ENCODE measurements at regions of chr4 and their contacts with region 1.

Region 1: GRCh38 chr4:152348670-152349069 is 187.2 kb downstream of the FBXW7 start:
- DNase-seq: no peak
- H3K4me3 Mint-ChIP-seq: no peak overlapping the region
- H3K27ac Mint-ChIP-seq: no peak overlapping the region
- H3K4me1 Mint-ChIP-seq: peaks cover 8% of the 10 kb centered on the region
- H3K27me3 Mint-ChIP-seq: no peaks in the 10 kb centered on the region
- CTCF ChIP-seq: no peak

Region 2: DNA sequence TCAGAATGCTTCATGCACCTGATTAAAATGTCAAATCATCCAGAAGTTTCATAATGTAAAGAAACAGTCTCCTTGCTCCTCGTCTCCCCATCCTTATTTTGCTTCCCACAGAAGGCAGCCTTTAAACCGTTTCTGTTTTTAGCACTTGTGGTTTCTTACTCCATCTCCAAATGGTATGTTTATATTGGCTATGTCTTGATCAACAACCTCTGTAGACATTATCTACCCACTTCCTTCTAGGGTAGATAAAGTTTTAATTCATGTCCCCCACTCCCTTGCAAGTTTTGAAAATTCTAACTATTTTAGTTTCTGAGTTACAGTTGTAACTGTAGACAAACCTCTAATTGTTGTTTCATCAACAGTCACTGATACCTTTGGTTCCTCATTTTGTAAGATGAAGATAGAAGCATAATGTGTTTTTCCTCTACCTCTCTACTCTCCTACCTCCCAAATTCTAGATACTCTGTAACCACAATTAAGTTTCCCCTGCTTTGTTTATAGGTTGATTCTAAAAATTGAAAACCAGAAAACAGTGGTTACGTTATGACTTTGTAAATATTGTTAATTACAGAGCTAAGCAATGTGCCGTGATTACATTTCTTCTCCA is 296.1 kb before region 1 on chr4:
- CTCF ChIA-PET with region 1: no interaction called
- intact Hi-C with region 1: no loop called
- DNase-seq: no peak
- H3K4me3 Mint-ChIP-seq: no peak overlapping the region
- H3K27ac Mint-ChIP-seq: no peak overlapping the region
- H3K4me1 Mint-ChIP-seq: no peaks in the 10 kb centered on the region
- H3K27me3 Mint-ChIP-seq: peaks cover 34% of the 10 kb centered on the region
- CTCF ChIP-seq: no peak

Region 3: GRCh38 chr4:152328596-152328995 is 20.1 kb before region 1 on chr4:
- CTCF ChIA-PET with region 1: no interaction called
- intact Hi-C with region 1: loop called (anchors 2 kb)
- DNase-seq: no peak
- H3K4me3 Mint-ChIP-seq: no peak overlapping the region
- H3K27ac Mint-ChIP-seq: no peak overlapping the region
- H3K4me1 Mint-ChIP-seq: no peaks in the 10 kb centered on the region
- H3K27me3 Mint-ChIP-seq: no peaks in the 10 kb centered on the region
- CTCF ChIP-seq: no peak

Region 4: DNA sequence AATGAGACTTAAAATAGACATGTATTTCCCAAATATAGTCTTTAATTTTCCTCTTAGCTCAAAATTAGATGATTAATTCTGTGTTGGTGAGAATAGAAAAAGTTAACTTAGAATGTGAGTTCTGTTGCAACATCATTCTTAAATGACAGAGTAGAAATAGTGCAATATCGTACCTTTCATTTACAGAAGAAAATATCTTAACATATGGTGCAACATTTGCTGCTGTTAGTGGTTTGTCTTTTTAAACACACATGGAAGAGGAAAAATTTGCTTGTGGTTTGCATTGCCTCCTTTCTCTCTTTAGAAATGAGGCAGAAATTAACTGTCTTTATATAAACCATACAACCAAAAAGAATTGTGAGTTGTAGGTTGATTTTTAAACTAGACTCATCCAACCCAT is 548.1 kb after region 1 on chr4:
- CTCF ChIA-PET with region 1: no interaction called
- intact Hi-C with region 1: no loop called
- DNase-seq: no peak
- H3K4me3 Mint-ChIP-seq: no peak overlapping the region
- H3K27ac Mint-ChIP-seq: no peak overlapping the region
- H3K4me1 Mint-ChIP-seq: peaks cover 9% of the 10 kb centered on the region
- H3K27me3 Mint-ChIP-seq: no peaks in the 10 kb centered on the region
- CTCF ChIP-seq: no peak